ENCODE measurements at regions of chr6 and their contacts with region 1.

Region 1: GRCh38 chr6:39330057-39330456 is 7.6 kb upstream of the KCNK16 start:
- DNase-seq: no peak
- H3K4me3 ChIP-seq: no peak overlapping the region
- H3K27ac ChIP-seq: no peak overlapping the region
- H3K4me1 ChIP-seq: no peaks in the 10 kb centered on the region
- H3K27me3 ChIP-seq: no peaks in the 10 kb centered on the region
- CTCF ChIP-seq: no peak
- EP300 ChIP-seq: no peak
- POLR2A ChIP-seq: no peak
- RAD21 ChIP-seq: no peak

Region 2: GRCh38 chr6:39347906-39348585 is 18.0 kb after region 1 on chr6:
- CTCF ChIA-PET with region 1: interaction called, 10 read pairs
- POLR2A ChIA-PET with region 1: no interaction called
- DNase-seq: peak in 1 of 2 experiments; percentile 97
- H3K4me3 ChIP-seq: no peak overlapping the region
- H3K27ac ChIP-seq: no peak overlapping the region
- H3K4me1 ChIP-seq: peaks cover 5 to 10% (median 9%) of the 10 kb centered on the region in 4 experiments
- H3K27me3 ChIP-seq: no peaks in the 10 kb centered on the region
- CTCF ChIP-seq: peak; percentile 82 to 93 (median 84)
- EP300 ChIP-seq: no peak
- POLR2A ChIP-seq: no peak
- RAD21 ChIP-seq: peak; percentile 89 to 94

Measured in H1 (cell line).